ENCODE measurements at regions of chr3 and their contacts with region 1.

Region 1: DNA sequence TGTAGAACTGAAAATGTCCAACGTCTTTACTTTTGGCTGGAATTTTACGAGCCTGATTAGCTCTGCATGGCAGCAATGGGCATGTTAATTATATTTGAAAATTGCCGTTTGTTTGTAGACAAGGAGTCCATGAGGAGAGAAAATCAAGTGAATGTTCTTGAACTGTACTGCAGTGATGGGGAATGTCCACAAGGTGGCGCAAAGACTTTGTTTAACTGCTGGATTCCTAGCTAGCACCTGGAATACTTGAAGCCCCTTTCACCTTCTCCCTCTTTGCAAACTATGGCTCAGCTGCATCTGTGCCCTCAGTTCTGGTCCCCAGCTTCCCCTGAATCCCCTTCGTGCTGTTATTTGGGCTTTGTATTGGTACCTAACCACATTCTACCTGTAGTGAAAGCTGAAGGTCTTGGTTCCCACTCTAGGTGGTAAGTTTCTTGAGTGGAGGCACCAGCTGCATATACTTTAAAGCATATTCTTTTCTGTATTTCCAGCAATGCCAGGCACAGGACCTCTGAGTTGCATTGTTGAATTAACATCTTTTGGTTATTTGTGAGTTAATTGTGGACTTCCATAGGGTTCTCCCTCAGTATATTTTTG is 25.3 kb downstream of the EXOG start:
- DNase-seq: peak; percentile 75
- ATAC-seq: peak; percentile 74
- H3K4me3 Mint-ChIP-seq: no peak overlapping the region
- H3K27ac Mint-ChIP-seq: no peak overlapping the region
- H3K4me1 Mint-ChIP-seq: peaks cover 23% of the 10 kb centered on the region
- H3K27me3 Mint-ChIP-seq: no peaks in the 10 kb centered on the region

Region 2: GRCh38 chr3:38392604-38393163 is 128.8 kb before region 1 on chr3:
- CTCF ChIA-PET with region 1: no interaction called
- POLR2A ChIA-PET with region 1: no interaction called
- intact Hi-C with region 1: no loop called
- DNase-seq: no peak
- ATAC-seq: no peak
- H3K4me3 Mint-ChIP-seq: no peak overlapping the region
- H3K27ac Mint-ChIP-seq: no peak overlapping the region
- H3K4me1 Mint-ChIP-seq: no peaks in the 10 kb centered on the region
- H3K27me3 Mint-ChIP-seq: no peaks in the 10 kb centered on the region

Region 3: GRCh38 chr3:38507120-38507519 is 14.4 kb before region 1 on chr3:
- CTCF ChIA-PET with region 1: interaction called, 39 read pairs
- POLR2A ChIA-PET with region 1: no interaction called
- intact Hi-C with region 1: no loop called
- DNase-seq: no peak
- ATAC-seq: no peak
- H3K4me3 Mint-ChIP-seq: no peak overlapping the region
- H3K27ac Mint-ChIP-seq: no peak overlapping the region
- H3K4me1 Mint-ChIP-seq: no peaks in the 10 kb centered on the region
- H3K27me3 Mint-ChIP-seq: no peaks in the 10 kb centered on the region

Region 4: DNA sequence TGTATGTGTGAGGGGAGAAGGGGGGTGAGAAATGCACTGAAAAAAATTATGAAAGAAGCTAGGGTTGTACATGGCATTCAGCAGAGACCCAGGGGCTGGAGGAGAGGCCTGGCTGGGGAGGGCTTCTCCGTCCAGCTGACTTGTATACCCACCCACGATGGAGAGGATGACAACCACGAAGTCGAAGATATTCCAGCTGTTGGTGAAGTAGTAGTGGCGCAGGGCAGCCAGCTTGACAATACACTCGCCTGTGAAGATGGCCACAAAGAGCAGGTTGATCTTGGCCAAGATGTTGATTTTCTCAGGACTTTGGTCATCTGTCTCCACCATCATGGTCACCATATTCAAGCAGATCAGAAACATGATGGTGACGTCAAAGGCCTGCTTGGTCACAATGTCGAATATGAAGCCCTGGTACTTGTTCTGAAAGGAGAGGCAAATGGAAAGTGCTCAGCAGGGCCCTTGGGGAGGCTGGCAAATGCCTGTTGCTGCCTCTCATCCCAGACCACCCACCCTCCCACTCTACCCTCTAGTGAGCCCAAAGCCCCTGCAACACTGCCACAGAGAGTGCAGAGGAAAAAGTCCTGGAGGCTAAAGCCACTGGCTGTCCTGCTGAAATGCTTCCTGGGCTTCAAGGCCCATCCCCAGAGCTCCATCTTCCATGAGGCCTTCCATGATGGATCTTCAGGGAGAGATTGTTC is 32.8 kb after region 1 on chr3:
- CTCF ChIA-PET with region 1: interaction called, 11 read pairs
- POLR2A ChIA-PET with region 1: no interaction called
- intact Hi-C with region 1: no loop called
- DNase-seq: no peak
- ATAC-seq: no peak
- H3K4me3 Mint-ChIP-seq: no peak overlapping the region
- H3K27ac Mint-ChIP-seq: no peak overlapping the region
- H3K4me1 Mint-ChIP-seq: no peaks in the 10 kb centered on the region
- H3K27me3 Mint-ChIP-seq: peaks cover 3% of the 10 kb centered on the region

Region 5: DNA sequence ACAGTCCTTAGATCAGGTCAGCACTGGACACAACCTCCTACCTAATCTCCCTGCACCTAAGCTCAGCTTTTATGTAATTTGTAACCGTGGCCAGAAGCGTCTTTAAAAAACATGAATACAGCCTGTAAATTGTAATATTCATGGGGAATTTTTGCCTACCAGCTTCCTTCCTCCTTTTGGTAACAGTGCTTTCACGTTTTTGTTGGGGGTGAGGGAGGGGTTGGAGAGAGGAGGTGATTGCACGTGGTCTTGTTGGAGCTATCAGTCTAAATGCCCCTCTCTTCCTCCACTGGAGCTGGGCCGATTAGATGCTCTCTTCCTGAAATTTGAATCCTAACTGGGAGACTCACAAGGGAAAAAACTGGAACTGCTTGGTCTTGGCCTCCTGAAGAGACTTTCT is 163.1 kb after region 1 on chr3:
- CTCF ChIA-PET with region 1: interaction called, 11 read pairs
- POLR2A ChIA-PET with region 1: no interaction called
- intact Hi-C with region 1: no loop called
- DNase-seq: no peak
- ATAC-seq: no peak
- H3K4me3 Mint-ChIP-seq: no peak overlapping the region
- H3K27ac Mint-ChIP-seq: no peak overlapping the region
- H3K4me1 Mint-ChIP-seq: no peaks in the 10 kb centered on the region
- H3K27me3 Mint-ChIP-seq: peaks cover 5% of the 10 kb centered on the region

Region 6: GRCh38 chr3:39000008-39000450 is 478.5 kb after region 1 on chr3:
- CTCF ChIA-PET with region 1: interaction called, 19 read pairs
- POLR2A ChIA-PET with region 1: no interaction called
- intact Hi-C with region 1: loop called (anchors 1 to 10 kb)
- DNase-seq: no peak
- ATAC-seq: peak; percentile 71
- H3K4me3 Mint-ChIP-seq: no peak overlapping the region
- H3K27ac Mint-ChIP-seq: no peak overlapping the region
- H3K4me1 Mint-ChIP-seq: no peaks in the 10 kb centered on the region
- H3K27me3 Mint-ChIP-seq: no peaks in the 10 kb centered on the region